ENCODE measurements at regions of chr16 and their contacts with region 1.

Region 1: GRCh38 chr16:12573730-12574383 is 229.8 kb downstream of the CPPED1 start:
- DNase-seq: no peak
- H3K4me3 ChIP-seq: no peak overlapping the region
- H3K27me3 ChIP-seq: no peaks in the 10 kb centered on the region
- CTCF ChIP-seq: peak; percentile 73

Region 2: DNA sequence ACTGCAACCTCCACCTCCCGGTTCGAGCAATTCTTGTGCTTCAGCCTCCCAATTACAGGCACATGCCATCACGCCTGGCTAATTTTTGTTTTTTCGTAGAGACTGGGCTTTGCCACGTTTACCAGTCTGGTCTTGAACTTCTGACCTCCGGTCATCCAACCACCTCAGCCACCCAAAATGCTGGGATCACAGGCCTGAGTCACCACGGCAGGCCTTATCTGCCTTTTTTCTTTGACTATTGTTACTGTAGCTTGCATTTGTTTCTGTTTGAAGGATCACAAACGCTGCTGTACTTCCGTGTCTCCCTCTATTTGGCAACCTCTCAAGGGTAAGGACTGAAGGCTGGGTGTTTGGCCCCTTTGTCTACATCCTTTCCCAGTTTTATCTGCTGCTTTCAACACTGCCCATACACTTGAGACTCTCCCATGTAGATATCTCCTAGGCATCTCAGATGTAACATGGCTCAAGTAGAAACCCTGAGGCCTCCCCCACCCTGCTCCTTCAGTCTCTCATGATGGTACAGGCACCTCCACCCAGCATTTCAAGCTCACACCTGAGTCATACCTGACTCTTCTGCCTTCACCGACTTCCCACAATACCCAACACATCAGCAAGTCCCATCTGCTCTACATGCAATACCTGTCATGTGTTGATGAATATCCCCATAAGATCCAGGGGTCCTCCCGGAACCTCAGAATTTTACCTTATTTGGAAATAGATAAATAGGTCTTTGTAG is 10.8 kb after region 1 on chr16:
- CTCF ChIA-PET with region 1: interaction called, 11 read pairs
- POLR2A ChIA-PET with region 1: no interaction called
- DNase-seq: no peak
- H3K4me3 ChIP-seq: no peak overlapping the region
- H3K27me3 ChIP-seq: no peaks in the 10 kb centered on the region
- CTCF ChIP-seq: no peak

Region 3: DNA sequence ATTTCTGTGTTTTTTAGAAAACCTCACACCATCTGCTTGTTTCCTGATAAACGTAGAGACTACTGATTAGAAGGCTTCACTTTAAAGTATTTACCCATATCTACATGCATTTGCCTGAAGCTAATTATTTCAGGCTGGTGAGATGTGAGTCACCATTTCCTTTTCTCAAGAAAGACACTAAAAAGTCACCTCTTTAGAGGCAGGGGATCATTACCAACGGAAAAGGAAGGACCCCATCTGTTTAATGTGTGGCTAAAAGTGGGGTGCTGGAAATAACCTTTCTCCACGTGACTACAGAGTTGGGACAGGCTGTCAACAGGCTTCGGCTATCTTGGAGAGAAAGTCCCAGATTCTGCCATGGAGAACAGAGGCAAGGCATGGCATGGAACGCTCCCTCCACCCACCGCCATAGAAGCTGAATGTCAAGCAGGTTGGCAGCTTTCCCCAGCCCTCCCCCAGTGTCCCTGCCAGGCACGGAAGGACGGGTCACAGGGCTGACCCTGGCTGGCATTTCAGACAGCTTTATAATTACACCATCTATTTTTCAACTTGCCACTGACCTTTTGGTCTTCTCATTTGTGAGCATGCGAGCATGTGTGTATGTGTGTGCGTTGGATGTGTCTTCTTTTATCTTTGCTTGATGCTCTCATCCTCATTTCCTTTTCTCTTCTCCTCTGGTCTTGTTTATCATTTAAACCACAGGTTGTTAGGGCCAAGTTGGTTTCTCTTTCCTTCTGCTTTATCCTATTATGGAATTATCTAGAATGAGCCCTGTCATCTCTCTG is 72.8 kb after region 1 on chr16:
- CTCF ChIA-PET with region 1: no interaction called
- POLR2A ChIA-PET with region 1: no interaction called
- DNase-seq: peak; percentile 11
- H3K4me3 ChIP-seq: no peak overlapping the region
- H3K27me3 ChIP-seq: no peaks in the 10 kb centered on the region; the same call in 1 of the 2 replicates
- CTCF ChIP-seq: no peak

Region 4: GRCh38 chr16:12819126-12820117 is 245.6 kb after region 1 on chr16:
- CTCF ChIA-PET with region 1: interaction called, 29 read pairs
- POLR2A ChIA-PET with region 1: no interaction called
- DNase-seq: no peak
- H3K4me3 ChIP-seq: no peak overlapping the region
- H3K27me3 ChIP-seq: no peaks in the 10 kb centered on the region
- CTCF ChIP-seq: peak; percentile 89

Measured in BJ (cell line).